Activated CD8-positive, alpha-beta memory T cell treated with anti-CD3 and anti-CD28 coated beads, Interleukin-2, amount 10 ng/mL, durations not matched to agents 7 days and 5 days (primary cell): ENCODE measurements at regions of chr19 and their contacts with region 1.

Region 1: DNA sequence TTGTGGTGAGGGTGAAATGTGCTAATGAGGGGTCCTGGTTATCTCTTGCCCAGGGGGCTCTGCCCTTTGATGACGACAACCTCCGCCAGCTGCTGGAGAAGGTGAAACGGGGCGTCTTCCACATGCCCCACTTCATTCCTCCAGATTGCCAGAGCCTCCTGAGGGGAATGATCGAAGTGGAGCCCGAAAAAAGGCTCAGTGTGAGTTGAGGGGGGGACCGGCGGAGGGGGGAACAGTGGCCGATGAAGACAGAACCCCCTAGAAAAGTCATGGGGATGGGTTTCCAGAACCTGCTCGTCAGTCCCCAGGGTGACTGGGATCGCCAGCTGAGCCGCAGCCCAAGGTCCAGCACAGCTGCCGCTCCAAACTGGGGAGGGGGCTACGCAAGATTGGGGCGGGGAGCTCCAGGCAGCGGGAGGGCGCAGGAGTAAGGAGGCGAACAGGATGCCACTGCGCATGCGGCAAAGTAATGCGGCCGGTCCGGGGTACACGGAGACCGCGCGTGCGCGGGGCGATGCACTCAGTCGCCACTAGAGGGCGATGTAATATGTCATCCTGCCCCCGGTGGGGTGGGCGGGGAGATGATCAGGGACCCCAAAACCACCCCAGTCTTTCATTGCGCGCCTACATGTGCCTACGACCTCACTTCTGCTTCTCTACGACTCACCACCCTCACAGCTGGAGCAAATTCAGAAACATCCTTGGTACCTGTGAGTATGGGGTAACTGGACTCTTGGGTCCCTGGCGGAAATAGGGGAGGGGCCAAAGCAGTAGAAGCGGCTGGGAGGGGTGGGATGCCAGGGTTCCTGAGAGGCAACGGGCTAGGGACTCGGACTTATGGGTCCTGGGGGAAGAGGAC is 17.9 kb downstream of the BRSK1 start:
- DNase-seq: peak; percentile 96
- ATAC-seq: peak; percentile 95
- H3K4me3 Mint-ChIP-seq: peak overlapping the region; percentile 78
- H3K27ac Mint-ChIP-seq: peak overlapping the region; percentile 94
- H3K4me1 Mint-ChIP-seq: peaks cover 31% of the 10 kb centered on the region
- H3K27me3 Mint-ChIP-seq: peaks cover 3% of the 10 kb centered on the region

Region 2: DNA sequence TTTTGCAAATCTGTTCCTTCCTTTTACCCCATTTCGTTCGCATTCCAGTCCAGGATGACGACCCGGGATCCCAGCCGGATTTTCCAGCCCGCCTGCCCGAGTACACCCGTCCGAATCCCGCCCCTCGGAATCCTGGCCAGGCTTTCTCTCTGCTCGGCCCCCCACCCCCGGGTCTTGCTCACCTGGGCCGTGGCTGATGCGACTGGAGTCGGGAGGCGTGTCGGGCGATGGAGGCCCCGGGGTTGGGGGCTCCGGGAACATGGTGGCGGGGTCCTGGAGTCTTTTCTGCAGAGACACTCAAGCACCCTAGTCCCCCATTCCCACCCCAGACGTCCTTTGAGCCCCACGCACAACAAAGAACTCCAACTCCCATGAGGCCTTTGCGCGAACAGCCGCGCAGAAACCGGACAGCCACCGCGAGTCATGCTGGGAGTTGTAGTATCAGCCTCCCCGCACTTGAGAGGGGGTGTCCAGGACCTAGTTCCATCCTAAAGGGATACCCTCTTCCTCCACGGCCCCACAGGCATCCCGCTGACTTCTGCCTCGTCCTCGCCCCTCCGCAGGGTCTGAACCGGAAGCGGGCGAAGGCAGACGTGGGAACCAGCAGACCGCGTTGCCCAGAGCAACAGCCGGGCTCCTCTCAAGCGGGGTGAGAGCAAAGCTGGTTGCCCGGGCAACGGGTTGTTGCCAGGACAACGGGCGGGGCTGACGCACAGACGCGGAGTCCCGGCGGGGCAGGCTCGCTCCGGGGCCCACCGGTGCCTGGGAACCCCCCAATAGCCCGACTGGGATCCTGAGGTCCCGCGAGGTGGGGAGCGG is 122.7 kb before region 1 on chr19:
- CTCF ChIA-PET with region 1: no interaction called
- DNase-seq: peak; percentile 96
- ATAC-seq: peak; percentile 88
- H3K4me3 Mint-ChIP-seq: peak overlapping the region; percentile 59
- H3K27ac Mint-ChIP-seq: no peak overlapping the region
- H3K4me1 Mint-ChIP-seq: peaks cover 26% of the 10 kb centered on the region
- H3K27me3 Mint-ChIP-seq: peaks cover 58% of the 10 kb centered on the region

Region 3: DNA sequence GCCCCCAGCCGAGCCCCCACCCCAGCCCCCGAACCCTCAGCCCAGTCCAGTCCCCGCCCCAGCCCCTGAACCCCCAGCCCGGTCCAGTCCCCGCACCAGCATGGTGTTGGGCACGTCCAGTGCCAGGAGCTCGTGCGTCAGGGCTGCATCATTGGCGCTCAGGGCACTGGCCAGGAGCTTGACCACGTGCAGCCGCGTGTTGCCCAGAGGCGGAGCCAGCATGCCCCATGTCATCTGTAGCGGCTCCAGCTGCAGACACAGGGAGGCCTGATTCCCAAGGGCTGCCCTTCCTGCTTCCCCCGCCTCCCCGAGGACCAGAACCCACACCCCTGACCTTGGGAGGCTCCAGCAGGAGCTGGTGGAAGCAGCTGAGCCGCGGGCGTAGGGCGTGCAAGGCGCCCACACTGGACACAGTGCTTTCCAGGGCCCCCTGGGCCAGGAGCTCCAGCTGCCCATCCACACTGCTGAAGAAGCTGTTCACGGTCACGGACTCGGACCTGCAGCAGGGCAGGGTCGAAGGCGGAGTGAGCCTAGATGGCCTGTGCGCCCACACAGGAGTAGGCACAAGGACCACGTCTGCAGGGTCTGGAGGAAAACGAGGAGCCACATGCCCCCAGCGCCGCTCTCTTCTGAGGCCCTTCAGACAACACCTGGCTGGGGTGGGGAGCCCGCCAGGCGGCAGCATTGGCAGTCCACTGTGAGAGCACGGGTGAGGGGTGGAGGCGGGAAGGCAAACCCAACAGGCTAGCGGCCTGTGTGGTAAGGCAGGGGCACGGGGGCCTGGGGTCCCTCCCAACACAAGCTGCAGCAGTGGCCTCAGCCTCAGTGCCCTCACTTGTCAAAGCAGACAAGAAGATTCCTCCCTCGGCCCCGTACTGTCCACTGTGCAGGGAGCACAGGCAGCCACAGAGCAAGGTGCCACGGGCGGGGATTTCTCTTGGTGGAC is 60.3 kb before region 1 on chr19:
- CTCF ChIA-PET with region 1: no interaction called
- DNase-seq: no peak
- ATAC-seq: no peak
- H3K4me3 Mint-ChIP-seq: no peak overlapping the region
- H3K27ac Mint-ChIP-seq: no peak overlapping the region
- H3K4me1 Mint-ChIP-seq: peaks cover 5% of the 10 kb centered on the region
- H3K27me3 Mint-ChIP-seq: no peaks in the 10 kb centered on the region

Region 4: GRCh38 chr19:55279770-55280643 is 21.7 kb before region 1 on chr19 and contains the start of gene HSPBP1:
- CTCF ChIA-PET with region 1: interaction called, 17 read pairs
- DNase-seq: peak; percentile 98
- ATAC-seq: peak; percentile 89
- H3K4me3 Mint-ChIP-seq: peak within 1 kb of the TSS; percentile 91
- H3K27ac Mint-ChIP-seq: peak within 1 kb of the TSS; percentile 98
- H3K4me1 Mint-ChIP-seq: peaks cover 62% of the 10 kb centered on the region
- H3K27me3 Mint-ChIP-seq: peaks cover 4% of the 10 kb centered on the region
- total RNA-seq, gene HSPBP1: 35.0 to 38.2 TPM

Region 5: GRCh38 chr19:55312621-55313512 is 11.2 kb after region 1 on chr19:
- CTCF ChIA-PET with region 1: interaction called, 25 read pairs
- DNase-seq: no peak
- ATAC-seq: no peak
- H3K4me3 Mint-ChIP-seq: no peak overlapping the region
- H3K27ac Mint-ChIP-seq: no peak overlapping the region
- H3K4me1 Mint-ChIP-seq: no peaks in the 10 kb centered on the region
- H3K27me3 Mint-ChIP-seq: no peaks in the 10 kb centered on the region

Region 6: GRCh38 chr19:55339048-55339888 is 37.6 kb after region 1 on chr19 and contains the start of gene KMT5C:
- CTCF ChIA-PET with region 1: interaction called, 45 read pairs
- DNase-seq: peak; percentile 100
- ATAC-seq: peak; percentile 87
- H3K4me3 Mint-ChIP-seq: peak within 1 kb of the TSS; percentile 73
- H3K27ac Mint-ChIP-seq: peak within 1 kb of the TSS; percentile 90
- H3K4me1 Mint-ChIP-seq: peaks cover 17% of the 10 kb centered on the region
- H3K27me3 Mint-ChIP-seq: peaks cover 14% of the 10 kb centered on the region
- total RNA-seq, gene KMT5C: 26.4 to 35.3 TPM

Region 7: DNA sequence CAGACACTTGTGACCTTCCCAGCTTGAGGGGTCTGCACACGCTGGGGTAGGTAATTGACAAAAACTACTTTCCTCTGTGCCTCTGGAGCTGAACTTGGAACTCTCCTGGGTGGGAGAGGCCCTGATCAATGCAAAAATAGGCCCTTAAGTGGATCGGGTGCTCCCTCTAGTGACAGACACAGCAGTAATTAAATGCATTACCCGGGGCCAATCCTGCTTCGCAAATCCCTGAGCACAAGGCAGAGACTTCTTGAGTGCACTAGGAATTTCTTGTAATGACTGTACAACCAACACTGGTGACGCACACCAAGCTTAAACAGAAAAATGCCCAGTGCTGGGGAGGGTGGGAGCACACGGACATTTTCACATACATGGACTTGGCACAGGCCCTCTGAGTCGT is 116.5 kb after region 1 on chr19:
- CTCF ChIA-PET with region 1: interaction called, 18 read pairs
- DNase-seq: peak; percentile 68
- ATAC-seq: peak; percentile 72
- H3K4me3 Mint-ChIP-seq: no peak overlapping the region
- H3K27ac Mint-ChIP-seq: no peak overlapping the region
- H3K4me1 Mint-ChIP-seq: peaks cover 16% of the 10 kb centered on the region
- H3K27me3 Mint-ChIP-seq: peaks cover 13% of the 10 kb centered on the region